Posterior vena cava (tissue), 2 donors: ENCODE measurements at regions of chr9 and their contacts with region 1.

Region 1: DNA sequence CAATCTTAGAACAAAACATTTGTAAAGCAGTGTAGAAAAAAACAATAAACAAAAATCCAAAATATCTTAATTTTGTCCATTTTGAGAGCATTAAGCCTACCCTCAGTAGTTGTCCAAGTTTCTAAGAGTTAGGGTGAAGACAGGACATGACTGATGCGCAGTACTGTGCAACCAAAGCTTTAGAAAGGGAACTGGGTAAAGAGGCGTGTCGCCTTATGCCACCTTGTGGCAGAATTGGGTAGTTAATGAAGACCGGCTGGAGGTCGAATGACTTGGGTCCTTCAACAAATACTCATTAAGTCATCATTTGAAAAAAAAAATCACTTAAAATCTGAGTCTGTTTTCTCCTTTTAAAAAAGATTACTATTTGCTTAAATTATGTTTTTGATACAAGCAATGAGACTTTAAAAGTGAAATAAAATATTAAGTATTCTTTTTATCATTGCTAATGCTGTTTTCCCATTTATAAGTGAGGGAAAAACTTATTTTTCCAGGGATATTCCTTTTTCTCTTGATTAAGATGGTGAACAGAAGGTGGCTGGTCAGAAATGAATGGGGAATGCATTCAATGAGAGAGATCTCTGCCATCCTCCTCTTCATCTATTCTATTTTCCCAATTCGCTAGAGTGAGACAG is 3.5 kb upstream of the RNF20 start:
- DNase-seq: no peak

Region 2: GRCh38 chr9:101458955-101459631 is 71.1 kb before region 1 on chr9:
- intact Hi-C with region 1: loop called in 1 of 2 experiments (anchors 2 kb)
- DNase-seq: no peak

Region 3: DNA sequence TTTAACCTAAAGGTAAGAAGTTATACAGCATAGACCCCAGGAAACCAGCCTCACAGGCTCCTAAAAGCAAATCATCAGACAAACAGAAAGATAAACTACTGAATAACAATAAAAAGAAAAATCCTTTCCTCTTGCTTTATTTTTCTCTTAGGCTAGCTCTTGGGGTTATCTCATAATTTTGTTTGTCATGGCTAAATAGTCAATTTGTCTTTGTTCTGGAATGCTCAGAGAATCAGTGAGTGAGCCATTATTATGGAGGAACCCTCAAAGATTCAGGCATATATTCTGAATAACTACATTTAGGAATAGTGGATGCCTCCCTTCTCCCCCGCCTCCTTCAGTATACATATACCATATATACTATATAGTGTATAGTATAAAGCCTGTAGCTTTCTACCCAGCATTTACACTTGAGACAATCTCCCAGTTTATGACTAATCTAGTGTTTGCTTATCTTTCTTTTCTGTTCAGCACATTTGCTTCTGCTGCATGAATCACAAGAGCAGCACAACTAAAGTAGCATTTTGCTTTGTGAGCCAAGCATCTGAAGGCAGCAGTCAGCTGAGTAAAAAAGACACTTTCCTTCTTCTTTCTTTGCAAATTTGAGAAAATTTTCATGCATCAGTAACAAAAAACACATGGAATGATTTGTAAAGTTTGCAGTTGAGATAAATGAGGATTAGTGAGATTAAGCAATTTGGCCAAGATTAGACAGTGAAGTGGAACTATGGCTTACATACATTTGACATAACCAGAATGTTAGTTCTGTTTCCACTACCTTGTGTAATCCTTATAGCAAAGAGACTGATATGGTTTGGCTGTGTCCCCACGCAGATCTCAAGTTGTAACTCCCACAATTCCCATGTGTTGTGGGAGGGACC is 109.8 kb after region 1 on chr9:
- intact Hi-C with region 1: loop called in 1 of 2 experiments (anchors 5 kb)
- DNase-seq: no peak